ENCODE measurements at regions of chr3 and their contacts with region 1.

Region 1: DNA sequence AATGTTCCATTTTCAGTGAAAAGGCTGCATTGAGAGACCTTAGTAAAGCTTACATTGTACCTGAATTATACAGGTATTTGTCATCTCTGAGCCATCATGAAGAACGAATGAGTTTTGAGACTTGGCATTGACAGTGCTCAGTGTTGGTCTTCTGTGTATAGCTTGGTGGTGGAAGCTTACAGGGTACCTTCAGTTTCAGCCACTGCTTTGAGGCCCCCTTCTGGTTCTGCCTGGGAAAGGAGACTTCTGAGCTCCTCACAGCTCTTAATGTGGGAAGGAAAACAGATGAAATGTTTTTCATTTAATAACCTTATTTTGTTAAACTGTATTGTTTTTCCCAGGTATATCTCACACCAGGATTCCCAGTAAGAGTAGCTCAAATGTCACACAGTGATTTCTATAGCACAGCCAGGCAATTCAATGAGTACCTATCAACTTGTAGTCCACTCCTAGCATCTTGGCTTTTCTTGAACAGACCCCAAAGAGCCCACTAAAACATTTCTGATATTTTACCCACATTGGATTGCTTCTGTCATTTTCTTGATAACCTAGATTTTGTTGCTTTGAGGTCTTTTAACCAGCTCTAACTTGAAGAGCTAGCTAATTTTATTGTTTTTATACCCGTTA is 5.6 kb downstream of the SERPINI1 start:
- DNase-seq: peak; percentile 53
- H3K4me3 Mint-ChIP-seq: no peak overlapping the region
- H3K27ac Mint-ChIP-seq: no peak overlapping the region
- H3K4me1 Mint-ChIP-seq: peaks cover 18% of the 10 kb centered on the region
- H3K27me3 Mint-ChIP-seq: no peaks in the 10 kb centered on the region

Region 2: DNA sequence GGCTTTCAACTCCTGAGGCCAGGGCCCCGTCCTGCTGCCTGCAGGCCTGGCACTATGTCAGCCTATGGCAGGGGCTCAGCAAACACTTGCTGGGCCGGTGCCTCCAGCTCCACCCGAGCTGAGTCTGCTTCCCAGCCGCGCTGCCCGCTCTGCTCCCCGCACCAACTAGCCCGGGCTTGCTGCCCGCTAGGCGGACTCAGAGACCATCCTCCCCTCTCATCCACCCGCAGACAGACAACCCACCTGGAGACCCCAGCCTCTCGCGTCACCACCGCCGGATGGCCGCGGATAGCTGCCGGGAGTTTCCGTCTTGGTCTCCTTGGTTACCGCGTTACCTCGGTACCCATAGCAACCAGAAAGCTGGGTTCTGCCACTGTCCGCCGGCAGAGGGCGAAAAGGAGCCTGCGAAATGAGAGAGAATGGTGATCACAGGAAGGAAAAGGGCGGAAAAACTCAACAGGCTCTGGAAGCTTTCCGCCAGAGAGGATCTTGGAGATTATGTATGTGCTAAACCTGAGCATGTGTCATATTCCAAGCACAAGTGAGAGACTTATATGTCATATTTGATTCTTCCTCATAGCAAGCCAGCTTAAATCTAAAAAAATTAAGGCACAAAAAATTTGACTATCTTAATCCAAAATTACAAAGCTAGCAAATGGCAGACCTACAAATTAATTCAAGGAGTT is 360.9 kb before region 1 on chr3 and contains the start of gene ZBBX:
- CTCF ChIA-PET with region 1: interaction called, 3 read pairs
- intact Hi-C with region 1: loop called (anchors 1 kb)
- DNase-seq: peak; percentile 92
- H3K4me3 Mint-ChIP-seq: peak within 1 kb of the TSS; percentile 77
- H3K27ac Mint-ChIP-seq: no peak within 1 kb of the TSS
- H3K4me1 Mint-ChIP-seq: peaks cover 4% of the 10 kb centered on the region
- H3K27me3 Mint-ChIP-seq: peaks cover 12% of the 10 kb centered on the region
- total RNA-seq, gene ZBBX: not detected